ENCODE measurements at regions of chr1 and their contacts with region 1.

Region 1: GRCh38 chr1:206865013-206865671 is at the start of gene IL20:
- DNase-seq: peak; percentile 85
- ATAC-seq: peak; percentile 82
- H3K4me3 Mint-ChIP-seq: no peak within 1 kb of the TSS
- H3K27ac Mint-ChIP-seq: no peak within 1 kb of the TSS
- H3K4me1 Mint-ChIP-seq: peaks cover 6% of the 10 kb centered on the region
- H3K27me3 Mint-ChIP-seq: peaks cover 42% of the 10 kb centered on the region
- total RNA-seq, gene IL20: not detected

Region 2: DNA sequence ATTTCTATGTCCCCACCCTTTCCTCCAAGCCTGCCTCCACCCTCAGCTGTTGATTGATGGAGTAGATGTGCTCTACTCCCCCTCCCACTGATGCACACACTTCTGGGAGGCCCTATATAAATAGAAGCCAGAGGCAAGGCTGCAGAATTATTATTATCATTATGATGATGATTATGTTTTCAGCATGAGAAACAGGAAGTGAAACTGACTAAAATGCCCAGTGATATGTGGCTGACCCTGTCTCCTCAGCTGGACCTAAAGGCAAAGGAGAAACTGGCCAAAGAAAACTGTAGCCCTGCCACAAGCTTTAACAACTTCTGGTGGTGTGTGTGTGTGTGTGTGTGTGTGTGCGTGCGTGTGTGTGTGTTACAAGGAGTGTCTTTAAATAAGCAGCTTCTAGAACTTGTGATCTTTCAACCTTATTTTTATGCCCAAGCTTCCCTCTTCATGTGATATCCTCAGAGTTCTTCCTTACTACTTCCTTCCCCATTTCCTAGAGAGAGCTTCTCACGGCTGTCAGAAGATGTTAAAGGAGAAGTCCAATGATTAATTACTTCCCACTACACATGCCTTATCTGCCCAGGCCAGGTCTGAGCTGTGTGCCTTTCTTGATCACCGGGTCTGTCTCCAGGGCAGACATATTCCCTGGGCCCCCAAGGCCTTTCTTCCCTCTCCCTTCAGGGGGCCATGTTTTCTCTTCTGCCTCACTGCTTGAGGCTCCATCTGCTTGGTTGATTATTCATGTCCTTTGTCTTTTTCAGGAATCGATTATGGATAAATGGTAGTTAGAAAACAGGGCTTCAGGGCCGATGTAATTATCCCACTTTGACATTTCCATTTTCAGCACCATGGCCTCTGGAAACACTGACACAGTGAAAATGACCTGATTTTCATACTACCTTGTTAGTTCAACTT is 192.0 kb before region 1 on chr1:
- CTCF ChIA-PET with region 1: no interaction called
- POLR2A ChIA-PET with region 1: no interaction called
- DNase-seq: no peak
- ATAC-seq: no peak
- H3K4me3 Mint-ChIP-seq: no peak overlapping the region
- H3K27ac Mint-ChIP-seq: no peak overlapping the region
- H3K4me1 Mint-ChIP-seq: peaks cover 6% of the 10 kb centered on the region
- H3K27me3 Mint-ChIP-seq: peaks cover 4% of the 10 kb centered on the region

Region 3: DNA sequence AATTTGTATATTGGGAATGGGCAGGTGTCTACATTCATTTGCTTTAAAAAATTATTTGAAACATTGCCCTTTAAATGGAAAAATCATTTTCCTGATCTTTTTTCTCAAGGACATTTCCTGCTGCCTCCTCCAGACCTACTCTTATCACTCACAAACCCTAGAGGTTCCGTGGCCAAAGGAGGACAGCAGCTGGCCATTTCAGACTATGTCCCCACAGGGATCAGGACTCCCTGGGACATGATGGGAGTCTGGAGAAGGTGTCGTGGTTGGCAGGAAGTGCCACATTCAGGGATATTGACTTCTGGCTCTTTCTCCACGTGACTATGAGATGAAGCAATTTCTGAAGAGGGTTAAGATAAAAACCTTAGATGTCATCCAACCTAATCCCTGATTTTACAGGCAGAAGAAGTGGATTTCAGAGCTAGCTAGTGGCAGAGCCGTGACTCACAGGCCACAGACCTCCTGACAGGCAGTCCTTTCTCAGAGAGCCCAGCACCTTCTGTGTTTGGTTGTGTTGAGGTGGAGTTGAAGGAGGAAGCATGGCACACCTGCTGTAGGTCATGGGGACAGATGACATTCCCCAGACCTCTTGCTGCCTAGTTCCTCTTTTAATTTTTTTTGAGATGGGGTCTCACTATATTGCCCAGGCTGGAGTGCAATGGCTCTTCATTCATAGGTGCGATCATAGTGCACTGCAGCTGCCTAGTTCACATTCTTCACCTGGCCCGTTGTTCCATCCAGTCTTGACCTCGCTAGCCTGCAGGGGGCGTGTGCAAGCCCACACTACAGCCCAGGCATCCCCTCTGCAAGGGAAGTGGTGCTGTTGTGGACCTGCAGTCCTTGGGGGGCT is 67.4 kb before region 1 on chr1:
- CTCF ChIA-PET with region 1: no interaction called
- POLR2A ChIA-PET with region 1: no interaction called
- DNase-seq: peak; percentile 45
- ATAC-seq: no peak
- H3K4me3 Mint-ChIP-seq: no peak overlapping the region
- H3K27ac Mint-ChIP-seq: no peak overlapping the region
- H3K4me1 Mint-ChIP-seq: peaks cover 51% of the 10 kb centered on the region
- H3K27me3 Mint-ChIP-seq: peaks cover 34% of the 10 kb centered on the region

Region 4: DNA sequence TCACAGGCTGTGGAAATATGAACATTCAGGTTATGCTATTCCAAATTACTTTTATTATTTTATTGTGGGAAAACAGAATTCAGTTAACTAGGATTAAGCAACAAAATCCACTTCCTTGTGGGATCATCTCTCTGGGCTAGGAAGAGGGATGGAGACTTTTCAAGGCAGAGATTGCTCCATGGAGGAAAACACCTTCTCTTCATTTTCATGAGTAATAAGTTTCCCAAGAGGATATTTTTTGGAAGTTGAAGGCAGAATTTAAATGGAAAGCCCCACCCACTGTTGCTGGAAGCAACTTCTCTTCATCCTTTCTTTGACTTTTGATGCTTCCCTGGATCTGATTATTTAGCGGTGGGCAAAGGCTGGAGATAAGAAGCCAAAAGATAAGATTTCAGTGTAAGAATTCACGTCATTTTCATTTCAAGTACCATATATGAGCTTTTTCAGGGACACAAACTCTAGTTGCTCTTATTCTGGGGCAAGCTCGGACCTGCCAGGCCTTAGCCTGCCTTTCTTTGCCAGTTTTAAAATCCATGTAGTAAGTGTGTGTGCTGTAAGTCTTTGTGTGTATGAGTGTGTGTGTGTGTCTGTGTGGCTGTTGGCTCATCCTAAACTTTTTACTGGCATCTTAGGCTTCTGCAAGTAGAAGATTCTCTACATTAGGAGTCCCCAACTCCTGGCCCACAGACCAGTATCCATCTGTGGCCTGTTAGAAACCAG is 20.4 kb after region 1 on chr1:
- CTCF ChIA-PET with region 1: interaction called, 24 read pairs
- POLR2A ChIA-PET with region 1: no interaction called
- DNase-seq: no peak
- ATAC-seq: no peak
- H3K4me3 Mint-ChIP-seq: no peak overlapping the region
- H3K27ac Mint-ChIP-seq: no peak overlapping the region
- H3K4me1 Mint-ChIP-seq: peaks cover 15% of the 10 kb centered on the region
- H3K27me3 Mint-ChIP-seq: peaks cover 15% of the 10 kb centered on the region

Measured in activated CD8-positive, alpha-beta T cell treated with anti-CD3 and anti-CD28 coated beads, Interleukin-2, amount 10 ng/mL, durations not matched to agents 7 days and 5 days (primary cell).